ENCODE measurements at regions of chr2 and their contacts with region 1.

Region 1: GRCh38 chr2:180520206-180520605 is 460.2 kb upstream of the UBE2E3 start:
- DNase-seq: peak; percentile 56
- ATAC-seq: peak; percentile 32
- H3K4me3 ChIP-seq: no peak overlapping the region
- H3K27ac ChIP-seq: peak overlapping the region; percentile 96
- H3K4me1 ChIP-seq: peaks cover 73% of the 10 kb centered on the region
- H3K27me3 ChIP-seq: no peaks in the 10 kb centered on the region
- CTCF ChIP-seq: peak; percentile 52

Region 2: DNA sequence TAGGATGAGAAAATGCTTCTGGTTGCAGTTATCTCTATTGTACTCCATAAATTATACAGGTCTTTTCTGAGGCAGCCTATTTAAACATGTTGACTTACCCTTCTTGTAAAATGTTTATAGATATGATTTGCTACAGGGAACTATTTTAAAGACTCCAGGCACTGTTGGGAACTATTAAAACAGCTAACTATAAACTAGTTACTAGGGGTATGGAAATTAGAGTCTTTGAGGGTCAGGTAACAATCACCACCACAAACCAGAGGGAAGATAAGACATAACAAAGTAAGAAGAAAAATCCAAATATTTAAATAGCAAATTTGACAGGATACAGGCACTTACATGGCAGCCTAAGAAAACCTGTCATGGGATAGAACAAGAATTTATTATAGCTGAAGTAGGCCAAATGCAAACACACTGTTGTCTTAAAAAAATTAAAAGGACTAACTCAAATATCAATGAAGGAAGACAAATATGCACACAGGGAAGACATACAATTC is 262.1 kb before region 1 on chr2:
- CTCF ChIA-PET with region 1: no interaction called
- POLR2A ChIA-PET with region 1: no interaction called
- intact Hi-C with region 1: loop called (anchors 1 kb)
- DNase-seq: peak; percentile 62
- ATAC-seq: peak; percentile 83
- H3K4me3 ChIP-seq: no peak overlapping the region
- H3K27ac ChIP-seq: peak overlapping the region; percentile 84
- H3K4me1 ChIP-seq: peaks cover 28% of the 10 kb centered on the region
- H3K27me3 ChIP-seq: no peaks in the 10 kb centered on the region
- CTCF ChIP-seq: no peak

Region 3: GRCh38 chr2:180553094-180553715 is 33.0 kb after region 1 on chr2:
- CTCF ChIA-PET with region 1: no interaction called
- POLR2A ChIA-PET with region 1: no interaction called
- intact Hi-C with region 1: loop called (anchors 2 kb)
- DNase-seq: no peak
- ATAC-seq: peak; percentile 76
- H3K4me3 ChIP-seq: no peak overlapping the region
- H3K27ac ChIP-seq: no peak overlapping the region
- H3K4me1 ChIP-seq: no peaks in the 10 kb centered on the region
- H3K27me3 ChIP-seq: no peaks in the 10 kb centered on the region
- CTCF ChIP-seq: no peak

Region 4: GRCh38 chr2:180690611-180691010 is 170.4 kb after region 1 on chr2:
- CTCF ChIA-PET with region 1: no interaction called
- POLR2A ChIA-PET with region 1: no interaction called
- intact Hi-C with region 1: loop called (anchors 1 kb)
- DNase-seq: peak; percentile 76
- ATAC-seq: peak; percentile 45
- H3K4me3 ChIP-seq: no peak overlapping the region
- H3K27ac ChIP-seq: peak overlapping the region; percentile 31
- H3K4me1 ChIP-seq: peaks cover 38% of the 10 kb centered on the region
- H3K27me3 ChIP-seq: no peaks in the 10 kb centered on the region
- CTCF ChIP-seq: no peak

Region 5: GRCh38 chr2:181058378-181059269 is 538.4 kb after region 1 on chr2:
- CTCF ChIA-PET with region 1: interaction called, 5 read pairs
- POLR2A ChIA-PET with region 1: no interaction called
- intact Hi-C with region 1: loop called (anchors 5 kb)
- DNase-seq: peak; percentile 72
- ATAC-seq: 0 out of 2 replicates have a peak, but pooled peaks have one; percentile 25
- H3K4me3 ChIP-seq: no peak overlapping the region
- H3K27ac ChIP-seq: no peak overlapping the region
- H3K4me1 ChIP-seq: peaks cover 7% of the 10 kb centered on the region; the same call in 1 of the 2 replicates
- H3K27me3 ChIP-seq: no peaks in the 10 kb centered on the region
- CTCF ChIP-seq: peak; percentile 93